ENCODE measurements at regions of chr3 and their contacts with region 1.

Region 1: GRCh38 chr3:36876181-36876936 is 68.5 kb downstream of the TRANK1 start:
- DNase-seq: peak in 4 of 5 donors; percentile 23 to 77 (median 58)
- H3K4me3 ChIP-seq: peak overlapping the region; percentile 49
- H3K4me3 Mint-ChIP-seq: peak overlapping the region; percentile 28 to 80 (median 74)
- H3K27ac ChIP-seq: peak overlapping the region; percentile 54
- H3K27ac Mint-ChIP-seq: peak overlapping the region; percentile 90 to 99 (median 94)
- H3K4me1 ChIP-seq: peaks cover 43% of the 10 kb centered on the region
- H3K4me1 Mint-ChIP-seq: peaks cover 58 to 83% (median 77%) of the 10 kb centered on the region in 3 donors
- H3K27me3 ChIP-seq: no peaks in the 10 kb centered on the region
- H3K27me3 Mint-ChIP-seq: no peaks in the 10 kb centered on the region

Region 2: GRCh38 chr3:36893137-36893557 is 16.8 kb after region 1 on chr3:
- CTCF ChIA-PET with region 1: interaction called, 11 read pairs
- POLR2A ChIA-PET with region 1: interaction called, 4 read pairs
- DNase-seq: peak in 4 of 5 donors; percentile 25 to 74 (median 45)
- H3K4me3 ChIP-seq: no peak overlapping the region
- H3K4me3 Mint-ChIP-seq: peak overlapping the region in 6 of 7 donors; percentile 4 to 54 (median 28)
- H3K27ac ChIP-seq: peak overlapping the region; percentile 30
- H3K27ac Mint-ChIP-seq: peak overlapping the region; percentile 71 to 96 (median 92)
- H3K4me1 ChIP-seq: peaks cover 47% of the 10 kb centered on the region
- H3K4me1 Mint-ChIP-seq: peaks cover 52 to 74% (median 59%) of the 10 kb centered on the region in 3 donors
- H3K27me3 ChIP-seq: no peaks in the 10 kb centered on the region
- H3K27me3 Mint-ChIP-seq: no peaks in the 10 kb centered on the region

Region 3: DNA sequence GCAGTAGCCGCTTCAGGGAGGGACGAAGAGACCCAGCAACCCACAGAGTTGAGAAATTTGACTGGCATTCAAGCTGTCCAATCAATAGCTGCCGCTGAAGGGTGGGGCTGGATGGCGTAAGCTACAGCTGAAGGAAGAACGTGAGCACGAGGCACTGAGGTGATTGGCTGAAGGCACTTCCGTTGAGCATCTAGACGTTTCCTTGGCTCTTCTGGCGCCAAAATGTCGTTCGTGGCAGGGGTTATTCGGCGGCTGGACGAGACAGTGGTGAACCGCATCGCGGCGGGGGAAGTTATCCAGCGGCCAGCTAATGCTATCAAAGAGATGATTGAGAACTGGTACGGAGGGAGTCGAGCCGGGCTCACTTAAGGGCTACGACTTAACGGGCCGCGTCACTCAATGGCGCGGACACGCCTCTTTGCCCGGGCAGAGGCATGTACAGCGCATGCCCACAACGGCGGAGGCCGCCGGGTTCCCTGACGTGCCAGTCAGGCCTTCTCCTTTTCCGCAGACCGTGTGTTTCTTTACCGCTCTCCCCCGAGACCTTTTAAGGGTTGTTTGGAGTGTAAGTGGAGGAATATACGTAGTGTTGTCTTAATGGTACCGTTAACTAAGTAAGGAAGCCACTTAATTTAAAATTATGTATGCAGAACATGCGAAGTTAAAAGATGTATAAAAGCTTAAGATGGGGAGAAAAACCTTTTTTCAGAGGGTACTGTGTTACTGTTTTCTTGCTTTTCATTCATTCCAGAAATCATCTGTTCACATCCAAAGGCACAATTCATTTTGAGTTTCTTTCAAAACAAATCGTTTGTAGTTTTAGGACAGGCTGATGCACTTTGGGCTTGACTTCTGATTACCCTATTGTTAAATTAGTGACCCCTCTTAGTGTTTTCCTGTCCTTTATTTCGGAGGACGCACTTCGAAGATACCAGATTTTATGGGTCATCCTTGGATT is 117.2 kb after region 1 on chr3 and contains the start of gene MLH1:
- CTCF ChIA-PET with region 1: interaction called, 4 read pairs
- POLR2A ChIA-PET with region 1: interaction called, 12 read pairs
- DNase-seq: peak; percentile 91 to 99 (median 94)
- H3K4me3 ChIP-seq: peak within 1 kb of the TSS; percentile 93
- H3K4me3 Mint-ChIP-seq: no peak within 1 kb of the TSS
- H3K27ac ChIP-seq: peak within 1 kb of the TSS; percentile 100
- H3K27ac Mint-ChIP-seq: no peak within 1 kb of the TSS
- H3K4me1 ChIP-seq: peaks cover 48% of the 10 kb centered on the region
- H3K4me1 Mint-ChIP-seq: peaks cover 19 to 40% (median 22%) of the 10 kb centered on the region in 3 donors
- H3K27me3 ChIP-seq: no peaks in the 10 kb centered on the region
- H3K27me3 Mint-ChIP-seq: no peaks in the 10 kb centered on the region
- total RNA-seq, gene MLH1: 66.4 to 73.2 TPM